Gastrocnemius medialis (tissue), 4 donors: ENCODE measurements at regions of chr1 and their contacts with region 1.

Region 1: GRCh38 chr1:235971571-235972310 is 93.1 kb downstream of the NID1 start:
- DNase-seq: peak; percentile 80 to 88
- ATAC-seq: peak; percentile 90 to 93
- H3K4me3 ChIP-seq: peak overlapping the region; percentile 35 to 57 (median 44)
- H3K27ac ChIP-seq: peak overlapping the region; percentile 76 to 81 (median 78)
- H3K4me1 ChIP-seq: peaks cover 5 to 6% of the 10 kb centered on the region in 2 donors
- H3K27me3 ChIP-seq: no peaks in the 10 kb centered on the region
- CTCF ChIP-seq: peak; percentile 54 to 76 (median 71)
- POLR2A ChIP-seq: peak in 1 of 2 donors; percentile 68

Region 2: DNA sequence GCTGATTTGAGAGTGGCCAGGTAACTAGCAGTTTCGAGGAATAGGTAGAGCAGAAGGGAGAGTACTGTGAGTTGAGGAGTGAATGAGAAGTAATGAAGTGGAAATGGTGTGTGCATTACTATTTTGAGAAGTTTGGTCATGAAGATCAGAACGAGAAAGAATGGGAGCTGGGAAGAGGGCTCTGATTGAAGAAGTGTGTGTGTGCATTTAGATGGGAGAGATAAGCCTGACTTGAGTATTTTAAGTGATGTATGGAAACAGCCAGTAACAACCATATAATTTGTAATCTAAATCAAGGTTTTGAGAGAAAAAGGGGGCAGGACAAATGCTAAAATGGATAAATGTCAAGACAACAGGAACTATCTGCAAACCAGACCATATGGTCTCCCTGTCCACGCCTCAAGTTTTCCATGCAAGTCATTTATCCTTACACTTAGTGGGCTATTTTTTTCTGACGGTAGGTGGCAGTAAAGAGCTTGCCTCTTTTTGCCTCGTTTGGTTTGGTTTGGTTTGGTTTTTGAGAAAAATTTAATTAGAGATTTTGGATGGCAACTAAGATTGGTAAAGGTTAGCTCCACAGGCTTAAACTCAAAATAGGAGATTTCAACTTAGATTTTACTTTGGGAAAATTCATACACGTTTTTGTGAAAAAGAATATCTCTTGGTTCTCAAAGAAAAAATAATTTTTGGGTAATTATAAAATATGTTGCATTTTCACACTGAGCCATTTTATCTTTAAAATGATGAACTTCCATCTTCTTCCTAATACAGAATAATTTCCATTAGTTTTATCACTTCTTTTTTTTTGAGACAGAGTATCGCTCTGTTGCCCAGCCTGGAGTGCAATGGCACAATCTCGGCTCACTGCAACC is 458.0 kb before region 1 on chr1:
- in situ Hi-C with region 1: loop called in 2 of 4 experiments (anchors 10 to 25 kb)
- intact Hi-C with region 1: loop called (anchors 1 kb)
- DNase-seq: no peak
- ATAC-seq: no peak
- H3K4me3 ChIP-seq: no peak overlapping the region
- H3K27ac ChIP-seq: no peak overlapping the region
- H3K4me1 ChIP-seq: no peaks in the 10 kb centered on the region
- H3K27me3 ChIP-seq: no peaks in the 10 kb centered on the region
- CTCF ChIP-seq: peak; percentile 61 to 92 (median 82)
- POLR2A ChIP-seq: no peak

Region 3: DNA sequence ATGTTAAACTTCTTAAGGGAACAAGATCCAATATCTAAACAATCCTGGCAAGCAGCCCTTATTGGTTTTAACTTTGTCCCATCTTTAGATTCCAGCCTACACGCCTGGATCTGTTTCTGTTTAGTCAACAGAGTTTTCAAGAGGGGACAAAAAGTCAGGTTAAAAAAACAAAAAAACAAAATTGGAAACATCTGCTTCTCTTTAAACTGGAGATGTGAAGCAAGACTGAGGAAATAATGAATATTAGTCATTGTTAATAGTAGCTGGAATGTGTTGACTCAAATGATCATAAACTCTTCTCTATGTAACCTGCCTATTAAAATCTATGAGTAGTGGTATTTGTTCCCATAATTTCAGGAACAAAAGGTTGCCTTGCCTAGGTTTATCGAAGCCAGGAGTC is 38.1 kb after region 1 on chr1:
- in situ Hi-C with region 1: no loop called
- intact Hi-C with region 1: no loop called
- DNase-seq: no peak
- ATAC-seq: peak; percentile 61 to 77
- H3K4me3 ChIP-seq: no peak overlapping the region
- H3K27ac ChIP-seq: peak overlapping the region; percentile 65 to 77 (median 72)
- H3K4me1 ChIP-seq: peaks cover 0 to 6% of the 10 kb centered on the region in 2 donors
- H3K27me3 ChIP-seq: no peaks in the 10 kb centered on the region
- CTCF ChIP-seq: no peak
- POLR2A ChIP-seq: no peak

Region 4: GRCh38 chr1:236064674-236065508 is 93.2 kb after region 1 on chr1 and contains the start of gene NID1:
- in situ Hi-C with region 1: no loop called
- intact Hi-C with region 1: loop called (anchors 5 kb)
- DNase-seq: peak; percentile 58 to 78
- ATAC-seq: peak; percentile 64 to 70
- H3K4me3 ChIP-seq: peak within 1 kb of the TSS; percentile 57 to 74 (median 68)
- H3K27ac ChIP-seq: peak within 1 kb of the TSS; percentile 72 to 86 (median 86)
- H3K4me1 ChIP-seq: no peaks in the 10 kb centered on the region
- H3K27me3 ChIP-seq: peaks cover 16 to 33% (median 18%) of the 10 kb centered on the region in 3 donors
- CTCF ChIP-seq: peak in 4 of 5 experiments; percentile 26 to 36 (median 30)
- POLR2A ChIP-seq: peak; percentile 64 to 85
- total RNA-seq, gene NID1: 33.7 to 79.0 (median 51.7) TPM

Region 5: GRCh38 chr1:236124956-236125355 is 153.2 kb after region 1 on chr1:
- in situ Hi-C with region 1: no loop called
- intact Hi-C with region 1: no loop called
- DNase-seq: no peak
- ATAC-seq: no peak
- H3K4me3 ChIP-seq: no peak overlapping the region
- H3K27ac ChIP-seq: no peak overlapping the region
- H3K4me1 ChIP-seq: no peaks in the 10 kb centered on the region
- H3K27me3 ChIP-seq: no peaks in the 10 kb centered on the region
- CTCF ChIP-seq: no peak
- POLR2A ChIP-seq: no peak